ENCODE measurements at regions of chr10 and their contacts with region 1.

Region 1: DNA sequence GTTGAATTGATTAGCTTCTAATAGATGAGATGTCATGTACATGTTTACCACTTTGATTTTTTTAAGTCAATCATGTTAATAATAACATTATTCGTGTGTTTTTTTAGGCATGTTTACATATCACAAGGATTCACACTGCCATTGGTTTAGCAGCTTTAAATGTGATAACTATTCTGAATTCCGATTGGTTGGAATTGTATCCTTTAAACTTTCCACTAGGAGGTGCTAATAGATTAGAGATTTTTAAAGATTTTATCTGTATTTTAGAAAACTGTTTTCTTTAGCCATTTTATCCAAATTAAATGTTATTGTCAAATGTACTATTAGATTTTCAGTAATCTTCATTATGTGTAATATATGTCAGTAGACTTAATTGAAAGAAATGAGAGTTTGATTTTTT is 83.2 kb downstream of the HECTD2 start:
- DNase-seq: peak in 1 of 2 experiments; percentile 41
- H3K4me3 ChIP-seq: no peak overlapping the region
- H3K27ac ChIP-seq: no peak overlapping the region
- H3K4me1 ChIP-seq: no peaks in the 10 kb centered on the region
- H3K27me3 ChIP-seq: no peaks in the 10 kb centered on the region
- CTCF ChIP-seq: peak; percentile 66

Region 2: GRCh38 chr10:91453535-91453934 is 39.8 kb before region 1 on chr10:
- CTCF ChIA-PET with region 1: no interaction called
- POLR2A ChIA-PET with region 1: no interaction called
- intact Hi-C with region 1: no loop called
- DNase-seq: no peak
- H3K4me3 ChIP-seq: no peak overlapping the region
- H3K27ac ChIP-seq: no peak overlapping the region
- H3K4me1 ChIP-seq: no peaks in the 10 kb centered on the region
- H3K27me3 ChIP-seq: no peaks in the 10 kb centered on the region
- CTCF ChIP-seq: no peak

Region 3: DNA sequence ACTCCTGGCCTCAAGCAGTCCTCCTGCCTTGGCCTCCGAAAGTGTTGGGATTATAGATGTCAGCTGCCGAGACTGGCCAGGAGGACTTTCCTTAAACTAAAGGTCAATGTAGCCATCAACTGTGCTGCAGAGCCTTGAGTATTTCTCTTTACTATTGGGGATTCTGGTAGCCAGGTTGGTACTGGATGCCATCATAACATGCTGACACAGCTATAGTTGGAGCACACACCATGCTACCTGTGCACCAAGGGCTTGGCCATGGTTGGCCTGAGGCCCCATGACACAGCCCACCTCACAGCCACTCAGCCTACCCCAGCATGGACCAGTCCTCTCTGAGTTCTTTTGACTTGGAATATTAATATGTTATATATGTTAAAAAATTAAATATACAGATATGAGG is 28.8 kb before region 1 on chr10:
- CTCF ChIA-PET with region 1: no interaction called
- POLR2A ChIA-PET with region 1: no interaction called
- intact Hi-C with region 1: no loop called
- DNase-seq: no peak
- H3K4me3 ChIP-seq: no peak overlapping the region
- H3K27ac ChIP-seq: no peak overlapping the region
- H3K4me1 ChIP-seq: no peaks in the 10 kb centered on the region
- H3K27me3 ChIP-seq: no peaks in the 10 kb centered on the region
- CTCF ChIP-seq: no peak

Region 4: DNA sequence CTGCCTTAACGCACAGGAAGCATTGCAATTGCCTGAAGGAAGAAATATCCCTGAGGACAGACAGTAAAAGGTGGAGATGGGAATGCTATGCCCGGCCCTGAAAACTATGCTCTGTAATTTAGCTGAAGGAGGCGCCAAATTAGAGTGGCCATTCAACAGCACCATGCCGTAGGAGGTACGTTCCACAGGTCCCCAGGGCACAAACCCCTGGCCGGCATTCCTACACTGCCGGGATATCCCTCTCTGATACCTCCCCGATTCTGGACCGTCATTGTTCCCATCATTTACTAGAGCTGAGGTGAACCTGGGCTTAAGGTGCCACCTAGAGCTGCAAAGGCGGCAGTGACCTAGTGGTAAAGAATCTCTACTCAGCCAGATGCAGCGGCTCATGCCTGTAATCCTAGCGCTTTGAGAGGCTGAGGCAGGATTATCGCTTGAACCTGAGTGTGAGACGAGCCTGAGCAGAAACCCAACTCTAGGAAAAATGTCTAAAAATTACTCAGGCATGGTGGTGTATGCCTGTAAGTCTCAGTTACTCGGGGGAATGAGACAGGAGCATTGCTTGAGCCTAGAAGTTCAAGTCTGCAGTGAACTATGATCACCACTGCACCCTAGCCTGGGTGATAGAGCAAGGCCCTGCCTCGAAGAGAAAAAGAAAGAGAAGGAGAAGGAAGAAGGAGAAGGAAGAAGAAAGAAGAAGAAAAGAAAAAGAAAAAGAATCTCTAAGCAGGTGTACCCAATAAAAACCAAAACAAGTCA is 251.9 kb after region 1 on chr10:
- CTCF ChIA-PET with region 1: no interaction called
- POLR2A ChIA-PET with region 1: no interaction called
- intact Hi-C with region 1: loop called (anchors 10 kb)
- DNase-seq: peak in 1 of 2 experiments; percentile 23
- H3K4me3 ChIP-seq: no peak overlapping the region
- H3K27ac ChIP-seq: no peak overlapping the region
- H3K4me1 ChIP-seq: no peaks in the 10 kb centered on the region
- H3K27me3 ChIP-seq: no peaks in the 10 kb centered on the region
- CTCF ChIP-seq: no peak